Activated naive CD4-positive, alpha-beta T cell treated with anti-CD3 and anti-CD28 coated beads, Interleukin-2, amount 10 ng/mL, durations not matched to agents 7 days and 5 days (primary cell): ENCODE measurements at regions of chr5 and their contacts with region 1.

Region 1: DNA sequence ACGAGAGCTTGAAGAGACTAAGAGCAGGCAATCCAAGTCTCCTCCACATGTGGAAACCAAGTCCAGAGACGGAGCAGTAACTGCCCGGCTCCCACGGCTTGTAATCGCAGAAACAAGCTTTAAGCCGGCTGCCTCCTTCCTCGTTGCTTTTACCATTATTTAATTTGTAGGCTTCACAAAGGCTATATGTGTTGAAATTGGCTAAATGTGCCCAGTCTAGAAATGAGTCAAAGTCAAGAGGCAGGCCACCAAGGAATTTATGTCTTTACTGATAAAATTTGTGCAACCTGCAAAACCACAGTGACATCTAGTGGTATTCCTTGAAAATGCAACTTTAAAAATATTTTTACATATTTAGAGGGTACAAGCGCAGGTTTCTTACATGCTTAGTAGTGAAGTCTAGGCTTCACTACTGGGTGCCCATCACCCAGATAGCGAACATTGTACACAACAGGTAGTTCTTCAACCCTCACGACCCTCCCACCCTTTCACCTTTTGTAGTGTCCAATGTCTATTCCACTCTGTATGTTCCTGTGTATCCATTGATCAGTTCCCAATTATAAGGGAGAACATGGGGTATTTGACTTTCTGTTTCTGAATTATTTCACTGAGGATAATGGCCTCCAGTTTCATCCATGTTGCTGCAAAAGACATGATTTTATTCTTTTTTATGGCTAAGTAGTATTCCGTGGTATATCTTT is 33.5 kb upstream of the EBF1 start:
- DNase-seq: no peak
- H3K4me3 Mint-ChIP-seq: no peak overlapping the region
- H3K27ac Mint-ChIP-seq: no peak overlapping the region
- H3K4me1 Mint-ChIP-seq: no peaks in the 10 kb centered on the region
- H3K27me3 Mint-ChIP-seq: peaks cover 10% of the 10 kb centered on the region

Region 2: GRCh38 chr5:158074992-158075769 is 1058.0 kb before region 1 on chr5:
- CTCF ChIA-PET with region 1: interaction called, 11 read pairs
- DNase-seq: peak; percentile 60
- H3K4me3 Mint-ChIP-seq: no peak overlapping the region
- H3K27ac Mint-ChIP-seq: no peak overlapping the region
- H3K4me1 Mint-ChIP-seq: no peaks in the 10 kb centered on the region
- H3K27me3 Mint-ChIP-seq: peaks cover 11% of the 10 kb centered on the region

Region 3: DNA sequence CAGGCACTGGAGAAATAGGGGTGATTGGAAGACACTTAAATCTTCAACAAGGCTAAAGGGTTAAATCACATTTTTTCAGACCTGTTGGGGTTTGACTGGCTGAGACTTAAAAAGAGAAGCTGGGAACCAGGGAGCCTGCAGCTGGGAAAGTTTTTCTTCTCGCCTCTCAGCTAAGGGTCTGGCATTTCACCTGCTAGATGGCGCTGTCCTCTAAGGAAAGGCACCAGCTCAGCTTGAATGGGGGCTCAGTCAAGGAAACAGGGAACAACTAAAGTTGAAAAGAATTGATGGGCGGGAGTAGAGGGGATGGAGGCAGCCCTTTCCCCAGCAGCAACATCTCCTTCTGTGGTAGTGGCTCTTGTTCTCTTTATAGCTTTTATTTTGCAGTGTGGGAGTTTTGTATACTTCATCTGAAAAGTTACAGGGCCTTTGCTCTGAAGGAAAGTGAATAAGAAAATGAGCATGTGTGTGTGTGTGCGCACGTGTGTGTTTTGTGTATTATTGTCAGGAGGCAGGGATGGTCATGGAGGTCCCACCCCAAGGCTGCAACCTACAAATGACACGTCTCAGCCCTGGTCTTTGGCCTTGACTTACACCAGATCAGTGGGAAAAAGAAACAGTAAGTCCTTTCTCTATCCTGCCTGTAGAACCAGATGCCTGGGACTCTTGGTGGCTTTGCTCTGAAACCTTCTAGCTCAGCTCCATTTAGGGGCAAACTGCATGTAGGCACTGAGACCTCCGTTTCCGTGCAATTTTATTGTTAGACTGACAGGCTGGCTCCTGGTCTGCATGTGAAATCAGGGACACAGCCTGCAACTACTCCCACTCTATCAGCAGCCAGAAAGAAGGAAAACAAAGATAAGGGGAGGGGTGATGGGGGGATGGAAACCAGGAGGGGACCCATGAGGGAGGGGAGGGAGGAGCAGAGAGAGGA is 958.0 kb before region 1 on chr5:
- CTCF ChIA-PET with region 1: interaction called, 16 read pairs
- DNase-seq: peak; percentile 68
- H3K4me3 Mint-ChIP-seq: no peak overlapping the region
- H3K27ac Mint-ChIP-seq: no peak overlapping the region
- H3K4me1 Mint-ChIP-seq: no peaks in the 10 kb centered on the region
- H3K27me3 Mint-ChIP-seq: peaks cover 15% of the 10 kb centered on the region

Region 4: DNA sequence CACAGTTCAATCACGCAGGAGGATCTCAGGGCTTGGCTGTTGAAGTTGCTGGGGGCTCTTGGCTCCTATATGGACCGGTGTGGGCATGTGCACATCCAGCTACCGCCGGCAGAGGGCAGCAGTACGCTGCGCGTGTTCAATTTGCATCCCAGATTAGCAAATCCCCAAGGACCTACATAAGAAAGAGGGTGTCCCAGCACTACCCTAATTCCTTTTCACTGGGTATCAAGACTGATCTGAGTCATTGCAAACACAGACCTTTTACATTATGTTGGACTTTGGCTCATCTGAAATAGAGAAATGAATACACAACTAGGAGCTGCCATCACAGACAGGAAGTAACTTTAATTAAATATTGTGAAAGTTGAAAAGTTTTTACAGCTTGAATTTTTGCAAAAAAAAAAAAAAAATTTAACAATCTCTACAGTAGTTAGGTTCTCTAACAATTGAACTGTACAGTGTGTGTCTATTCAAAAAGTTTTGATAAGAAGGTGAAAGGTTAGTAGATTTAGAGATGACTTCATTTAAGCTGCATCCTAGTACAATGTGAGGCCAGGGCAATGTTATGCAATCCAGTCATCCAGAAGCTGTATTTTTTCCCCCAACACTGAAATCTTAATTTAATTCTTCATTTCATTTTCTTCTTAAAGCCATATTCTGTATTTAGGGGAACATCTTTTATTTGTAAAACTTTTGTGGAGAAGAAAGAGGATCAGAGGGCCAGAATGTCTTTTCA is 437.4 kb before region 1 on chr5:
- CTCF ChIA-PET with region 1: interaction called, 14 read pairs
- DNase-seq: peak; percentile 71
- H3K4me3 Mint-ChIP-seq: no peak overlapping the region
- H3K27ac Mint-ChIP-seq: no peak overlapping the region
- H3K4me1 Mint-ChIP-seq: no peaks in the 10 kb centered on the region
- H3K27me3 Mint-ChIP-seq: peaks cover 9% of the 10 kb centered on the region

Region 5: GRCh38 chr5:159120446-159120845 is 12.7 kb before region 1 on chr5:
- CTCF ChIA-PET with region 1: interaction called, 11 read pairs
- DNase-seq: no peak
- H3K4me3 Mint-ChIP-seq: peak overlapping the region; percentile 45
- H3K27ac Mint-ChIP-seq: peak overlapping the region; percentile 91
- H3K4me1 Mint-ChIP-seq: peaks cover 23% of the 10 kb centered on the region
- H3K27me3 Mint-ChIP-seq: peaks cover 6% of the 10 kb centered on the region